Activated naive CD4-positive, alpha-beta T cell treated with anti-CD3 and anti-CD28 coated beads for 36 hours (primary cell): ENCODE measurements at regions of chr16 and their contacts with region 1.

Region 1: DNA sequence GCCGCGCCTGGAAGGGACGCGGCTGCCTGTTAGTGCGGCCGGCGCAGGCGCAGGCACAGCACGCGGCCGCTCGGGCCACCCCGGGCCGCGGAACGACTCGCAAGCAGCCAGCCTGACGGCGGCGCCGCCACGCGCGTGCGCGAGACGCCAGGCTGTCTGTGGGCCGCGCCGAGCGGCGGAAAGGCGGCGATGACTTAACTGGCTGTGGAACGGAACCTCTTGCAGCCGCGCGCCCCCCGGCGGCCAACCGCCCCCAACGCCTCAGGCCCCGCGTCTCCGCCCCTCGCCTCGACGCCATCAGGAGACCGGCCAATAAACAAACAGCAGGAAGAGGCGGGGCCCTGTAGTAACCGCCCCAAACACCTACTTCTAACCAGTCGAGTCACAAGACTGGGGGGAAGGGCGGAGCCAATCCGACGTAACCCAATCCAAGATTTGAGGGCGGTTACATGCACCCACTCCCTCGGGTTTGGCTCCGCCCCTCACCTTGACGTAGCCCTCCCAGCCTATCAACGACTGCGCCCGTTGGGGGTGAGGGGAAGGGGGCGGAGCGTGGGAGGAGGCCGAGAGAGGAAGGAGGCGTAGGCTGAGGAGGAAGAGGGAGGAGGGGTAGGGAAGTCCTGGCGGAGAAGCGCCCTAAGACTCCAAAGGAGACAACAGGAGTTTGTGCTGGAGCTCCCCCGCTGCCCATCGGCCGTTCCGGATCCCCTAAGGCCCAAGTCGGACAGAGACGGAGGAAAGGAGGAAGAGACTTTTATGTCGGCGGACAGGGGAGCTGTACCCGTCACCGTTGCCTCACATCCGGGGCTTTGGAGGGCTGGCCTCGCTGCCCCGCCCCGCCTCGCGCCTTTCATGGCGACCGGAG is at the start of gene FBRS:
- DNase-seq: peak; percentile 100
- H3K4me3 Mint-ChIP-seq: peak within 1 kb of the TSS; percentile 99
- H3K27ac Mint-ChIP-seq: peak within 1 kb of the TSS; percentile 100
- H3K4me1 Mint-ChIP-seq: peaks cover 42% of the 10 kb centered on the region
- H3K27me3 Mint-ChIP-seq: no peaks in the 10 kb centered on the region
- total RNA-seq, gene FBRS: 83.8 to 84.8 TPM

Region 2: DNA sequence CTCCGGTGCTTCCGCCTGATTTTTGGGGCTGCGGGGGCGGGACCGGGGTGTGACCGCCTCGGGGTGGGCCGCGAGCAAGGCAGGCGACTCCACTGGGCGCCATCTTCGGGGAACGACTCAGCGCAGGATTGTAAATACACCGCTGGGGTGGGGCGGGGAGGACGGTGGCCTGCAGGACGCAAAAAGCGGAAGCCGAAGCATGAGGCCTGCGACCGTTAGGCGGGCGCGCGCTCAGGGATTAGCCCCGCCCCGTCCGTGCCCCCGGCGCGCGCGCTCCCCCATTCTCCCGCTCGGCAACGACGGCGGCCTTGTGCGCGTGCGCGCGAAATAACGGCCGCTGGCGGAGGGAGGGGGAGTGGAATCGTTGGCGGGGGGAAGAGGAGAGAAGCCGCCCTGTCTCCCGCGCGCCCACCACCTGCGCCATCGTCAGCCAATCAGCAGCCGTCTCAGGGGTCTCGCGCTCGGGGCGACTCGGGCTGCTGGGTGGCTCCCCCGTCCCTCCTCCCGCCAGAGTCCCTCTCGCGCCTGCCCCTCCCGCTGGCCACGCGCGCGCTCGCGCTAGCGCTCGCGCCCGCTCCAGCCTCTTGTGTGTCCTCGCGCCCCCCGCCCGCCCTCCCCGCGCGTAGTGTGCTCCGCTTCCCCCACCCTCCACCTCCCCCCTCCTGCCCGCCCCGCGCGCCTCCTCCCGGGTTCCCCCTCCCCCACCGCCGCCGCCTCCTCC is 852.6 kb before region 1 on chr16:
- CTCF ChIA-PET with region 1: no interaction called
- intact Hi-C with region 1: loop called (anchors 5 kb)
- DNase-seq: peak; percentile 99
- H3K4me3 Mint-ChIP-seq: peak overlapping the region; percentile 98
- H3K27ac Mint-ChIP-seq: peak overlapping the region; percentile 100
- H3K4me1 Mint-ChIP-seq: peaks cover 37% of the 10 kb centered on the region
- H3K27me3 Mint-ChIP-seq: no peaks in the 10 kb centered on the region

Region 3: GRCh38 chr16:30378236-30379204 is 279.6 kb before region 1 on chr16:
- CTCF ChIA-PET with region 1: interaction called, 3 read pairs
- intact Hi-C with region 1: loop called (anchors 2 kb)
- DNase-seq: peak; percentile 100
- H3K4me3 Mint-ChIP-seq: peak overlapping the region; percentile 99
- H3K27ac Mint-ChIP-seq: peak overlapping the region; percentile 99
- H3K4me1 Mint-ChIP-seq: peaks cover 43% of the 10 kb centered on the region
- H3K27me3 Mint-ChIP-seq: no peaks in the 10 kb centered on the region

Region 4: DNA sequence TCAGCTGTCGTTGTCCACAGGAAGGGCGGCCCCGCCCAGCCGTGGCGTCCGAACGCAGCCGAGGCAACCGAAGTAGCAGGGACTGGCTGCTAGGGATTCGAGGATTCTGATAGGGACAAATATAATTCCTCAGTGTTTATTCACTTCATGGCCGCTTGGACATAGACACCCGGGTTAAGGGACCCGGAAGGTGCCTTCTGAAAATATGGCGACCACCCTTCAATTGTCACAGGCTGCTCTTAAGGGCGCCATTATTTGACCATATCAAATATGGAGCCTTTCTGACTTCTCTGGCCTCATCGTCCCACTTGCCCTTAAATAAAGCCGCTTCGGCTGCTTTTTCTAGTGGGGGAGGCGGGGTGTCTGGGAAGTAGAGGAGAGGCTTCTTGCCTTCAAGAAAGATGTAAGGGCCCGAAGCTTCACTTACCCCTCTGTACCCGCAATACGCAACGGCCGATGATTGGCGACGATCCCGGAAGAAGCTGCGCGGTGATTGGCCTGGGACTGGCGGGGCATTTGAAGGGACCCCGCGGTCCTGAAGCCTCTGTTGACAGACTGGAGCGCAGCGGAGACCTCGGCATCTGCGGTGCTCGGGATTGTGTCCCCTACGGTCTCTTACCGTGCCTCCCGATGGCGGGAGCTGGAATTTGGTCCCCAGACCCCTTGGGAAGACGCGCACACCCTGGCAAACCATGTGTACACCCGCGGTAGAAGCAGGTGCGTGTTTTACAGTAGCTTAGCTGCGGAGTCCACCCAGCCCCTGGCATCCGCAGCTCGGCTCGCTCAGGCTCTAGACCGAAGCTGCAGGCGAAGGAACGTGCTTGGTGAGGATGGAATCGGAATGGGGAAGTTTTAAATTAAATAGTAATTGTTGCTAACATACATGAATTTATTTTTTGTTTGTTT is 86.2 kb before region 1 on chr16 and contains the start of gene ZNF688:
- CTCF ChIA-PET with region 1: no interaction called
- intact Hi-C with region 1: loop called (anchors 1 kb)
- DNase-seq: peak; percentile 94
- H3K4me3 Mint-ChIP-seq: peak within 1 kb of the TSS; percentile 89
- H3K27ac Mint-ChIP-seq: peak within 1 kb of the TSS; percentile 94
- H3K4me1 Mint-ChIP-seq: peaks cover 56% of the 10 kb centered on the region
- H3K27me3 Mint-ChIP-seq: no peaks in the 10 kb centered on the region
- total RNA-seq, gene ZNF688: 3.7 to 3.9 TPM

Region 5: GRCh38 chr16:30698139-30698815 is 40.2 kb after region 1 on chr16:
- CTCF ChIA-PET with region 1: interaction called, 42 read pairs
- intact Hi-C with region 1: loop called (anchors 1 kb)
- DNase-seq: peak; percentile 100
- H3K4me3 Mint-ChIP-seq: peak overlapping the region; percentile 94
- H3K27ac Mint-ChIP-seq: peak overlapping the region; percentile 99
- H3K4me1 Mint-ChIP-seq: peaks cover 37% of the 10 kb centered on the region
- H3K27me3 Mint-ChIP-seq: no peaks in the 10 kb centered on the region

Region 6: DNA sequence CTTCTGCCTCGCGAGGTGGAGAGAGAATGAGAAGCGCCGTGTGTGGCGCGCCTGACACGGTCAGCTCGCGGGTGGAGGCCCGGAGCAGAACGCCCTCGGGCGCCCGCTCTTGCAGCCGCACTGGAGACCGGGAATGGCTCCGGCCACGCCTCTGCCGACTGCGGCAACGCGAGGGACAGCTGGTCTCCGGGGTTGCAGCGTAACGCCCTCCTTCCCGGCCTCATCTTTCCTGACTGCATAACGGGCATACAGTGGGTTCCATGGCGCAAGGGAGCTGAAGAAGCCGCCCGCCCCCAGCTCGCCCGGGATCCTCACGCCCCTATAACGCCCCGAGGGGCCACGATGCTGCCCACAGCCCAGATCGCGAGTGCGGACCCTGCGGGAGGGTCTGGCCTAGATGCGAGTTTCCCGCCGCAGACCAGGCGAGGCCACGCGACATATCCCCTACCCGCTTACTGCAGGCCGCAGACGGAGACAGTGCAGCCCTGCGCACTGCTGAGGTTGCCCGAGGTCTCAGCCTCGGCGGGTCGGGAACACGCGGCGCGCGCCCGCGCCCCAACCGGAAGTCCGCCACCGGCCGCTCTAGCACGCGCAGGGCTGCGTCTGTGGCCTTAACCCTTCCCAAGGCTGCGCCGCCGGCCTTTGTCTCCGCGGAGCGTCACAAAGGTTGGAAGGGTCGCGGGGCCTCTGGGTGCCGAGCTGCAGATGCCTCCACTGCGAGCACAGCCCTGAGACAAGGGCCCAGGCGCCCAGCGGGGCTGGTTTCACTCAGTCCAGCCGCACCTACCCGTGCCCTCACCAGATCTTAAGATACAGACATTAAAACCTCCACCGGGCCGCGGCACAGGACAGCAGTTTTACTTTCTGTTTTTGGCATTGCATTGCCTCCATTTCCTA is 217.0 kb after region 1 on chr16:
- CTCF ChIA-PET with region 1: no interaction called
- intact Hi-C with region 1: no loop called
- DNase-seq: peak; percentile 90
- H3K4me3 Mint-ChIP-seq: peak overlapping the region; percentile 92
- H3K27ac Mint-ChIP-seq: peak overlapping the region; percentile 96
- H3K4me1 Mint-ChIP-seq: peaks cover 40% of the 10 kb centered on the region
- H3K27me3 Mint-ChIP-seq: no peaks in the 10 kb centered on the region

Region 7: DNA sequence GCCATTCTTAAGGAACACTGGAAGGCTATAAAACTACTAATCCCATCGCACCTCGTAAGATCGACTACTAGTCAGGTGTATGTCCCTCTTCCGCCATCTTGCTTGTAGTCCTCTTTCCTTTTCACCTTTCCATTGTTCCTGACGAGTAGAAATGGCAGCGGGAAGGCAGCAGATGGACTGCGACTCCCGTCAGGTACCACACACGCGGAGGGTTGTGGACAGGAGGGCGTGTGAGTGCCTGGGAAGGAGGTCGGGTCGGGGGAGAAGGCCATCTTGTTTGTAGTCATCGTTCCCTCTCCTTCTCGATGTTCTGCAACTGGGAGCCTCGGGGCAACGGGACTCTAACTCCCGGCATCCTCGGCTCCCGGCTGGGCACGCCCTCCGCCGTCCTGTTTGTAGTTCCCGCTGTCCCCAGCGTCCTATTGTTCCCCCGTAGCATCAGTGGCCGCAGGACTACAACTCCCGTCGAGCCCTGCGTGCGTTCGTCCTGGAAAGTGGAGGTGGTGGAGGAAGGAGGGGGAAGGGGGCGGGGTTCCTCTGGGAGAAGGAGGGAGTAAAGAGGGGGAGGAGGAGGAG is 264.9 kb after region 1 on chr16:
- CTCF ChIA-PET with region 1: no interaction called
- intact Hi-C with region 1: loop called (anchors 1 kb)
- DNase-seq: peak; percentile 99
- H3K4me3 Mint-ChIP-seq: peak overlapping the region; percentile 99
- H3K27ac Mint-ChIP-seq: peak overlapping the region; percentile 100
- H3K4me1 Mint-ChIP-seq: peaks cover 14% of the 10 kb centered on the region
- H3K27me3 Mint-ChIP-seq: no peaks in the 10 kb centered on the region